Left ventricle myocardium superior (tissue), 1 donor: ENCODE measurements at regions of chr19 and their contacts with region 1.

Region 1: DNA sequence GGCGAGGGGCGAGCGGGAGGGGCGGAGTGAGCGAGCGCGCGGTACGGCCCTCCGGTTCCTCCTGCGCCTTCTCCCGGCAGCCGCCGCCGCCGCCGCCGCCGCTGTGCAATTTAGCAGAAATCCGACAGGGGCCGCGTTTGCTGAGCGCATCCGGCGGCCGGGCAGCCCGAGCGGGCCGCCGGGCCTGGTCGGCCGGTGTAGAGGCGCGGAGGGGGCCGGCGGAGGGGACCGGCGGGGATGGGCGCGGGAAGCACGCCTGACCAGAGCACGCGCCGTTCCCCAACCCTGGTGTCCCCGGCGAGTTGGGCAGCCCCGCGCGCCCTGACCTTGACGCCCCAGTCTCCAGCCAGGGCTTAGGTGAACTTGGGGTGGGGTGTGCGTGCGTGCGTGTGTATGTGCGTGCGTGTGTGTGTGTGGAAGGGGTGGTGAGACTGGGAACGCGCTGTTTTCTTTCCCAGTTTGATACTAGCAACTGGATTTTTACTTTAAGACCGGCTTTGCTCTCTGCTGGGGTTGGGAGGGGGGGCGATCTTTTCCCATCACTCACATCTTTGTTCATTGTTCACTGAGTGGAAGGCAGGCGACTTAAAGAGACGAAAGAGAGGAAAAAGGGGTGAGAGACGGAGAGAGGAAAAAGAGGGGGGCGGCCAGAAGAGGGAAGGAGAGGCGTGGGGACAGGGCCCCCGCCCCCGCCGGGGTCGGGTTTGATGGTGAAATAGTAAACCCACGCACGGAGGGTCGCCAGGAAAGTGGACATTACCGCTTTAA is 144.3 kb upstream of the ZNF536 start:
- DNase-seq: peak; percentile 81
- ATAC-seq: peak; percentile 79

Region 2: DNA sequence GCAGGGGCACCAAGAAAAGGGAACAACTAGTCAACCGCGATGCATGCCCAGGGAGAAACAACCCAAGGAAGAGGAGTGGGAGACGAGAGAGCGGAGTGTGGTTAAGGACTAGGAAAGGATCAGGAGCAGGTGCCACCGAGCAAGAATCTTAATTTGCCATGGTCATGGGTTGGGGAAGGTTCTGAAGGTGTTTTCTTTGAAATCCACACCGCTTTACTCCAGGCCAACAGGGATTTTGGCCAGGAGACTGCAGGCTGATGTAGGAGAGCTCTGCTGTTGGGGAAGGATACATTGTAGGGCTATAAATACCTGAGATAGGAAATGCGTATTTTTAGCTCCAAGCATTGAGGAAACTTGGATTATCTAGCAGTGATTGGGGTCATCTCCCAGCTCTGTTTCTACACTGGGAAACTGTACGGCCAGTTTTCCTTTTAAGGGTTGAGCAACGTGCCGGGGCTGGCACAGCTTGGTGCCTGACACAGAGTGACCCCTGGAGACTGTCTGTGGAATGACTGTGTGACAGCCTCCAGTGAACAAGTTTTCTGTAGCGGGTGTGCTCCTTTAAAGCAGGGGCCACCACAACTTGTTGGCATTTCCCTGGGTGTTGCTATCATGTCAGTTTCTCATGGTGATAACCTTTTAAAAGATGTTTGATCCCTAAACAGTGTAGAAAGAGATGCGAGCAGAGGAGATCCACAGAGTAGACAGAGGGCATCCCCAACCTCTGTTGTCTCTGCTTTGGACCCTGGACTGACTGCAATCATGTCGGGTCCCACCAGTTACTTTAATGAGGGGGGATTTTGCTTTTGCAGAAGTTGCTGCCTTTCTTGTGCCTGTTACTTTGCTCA is 178.6 kb after region 1 on chr19:
- intact Hi-C with region 1: loop called (anchors 10 kb)
- DNase-seq: peak; percentile 49
- ATAC-seq: peak; percentile 98

Region 3: GRCh38 chr19:30649934-30650614 is 422.2 kb after region 1 on chr19:
- intact Hi-C with region 1: loop called (anchors 10 kb)
- DNase-seq: no peak
- ATAC-seq: peak; percentile 44